Right ventricle myocardium inferior (tissue), 1 donor: ENCODE measurements at regions of chr11 and their contacts with region 1.

Region 1: DNA sequence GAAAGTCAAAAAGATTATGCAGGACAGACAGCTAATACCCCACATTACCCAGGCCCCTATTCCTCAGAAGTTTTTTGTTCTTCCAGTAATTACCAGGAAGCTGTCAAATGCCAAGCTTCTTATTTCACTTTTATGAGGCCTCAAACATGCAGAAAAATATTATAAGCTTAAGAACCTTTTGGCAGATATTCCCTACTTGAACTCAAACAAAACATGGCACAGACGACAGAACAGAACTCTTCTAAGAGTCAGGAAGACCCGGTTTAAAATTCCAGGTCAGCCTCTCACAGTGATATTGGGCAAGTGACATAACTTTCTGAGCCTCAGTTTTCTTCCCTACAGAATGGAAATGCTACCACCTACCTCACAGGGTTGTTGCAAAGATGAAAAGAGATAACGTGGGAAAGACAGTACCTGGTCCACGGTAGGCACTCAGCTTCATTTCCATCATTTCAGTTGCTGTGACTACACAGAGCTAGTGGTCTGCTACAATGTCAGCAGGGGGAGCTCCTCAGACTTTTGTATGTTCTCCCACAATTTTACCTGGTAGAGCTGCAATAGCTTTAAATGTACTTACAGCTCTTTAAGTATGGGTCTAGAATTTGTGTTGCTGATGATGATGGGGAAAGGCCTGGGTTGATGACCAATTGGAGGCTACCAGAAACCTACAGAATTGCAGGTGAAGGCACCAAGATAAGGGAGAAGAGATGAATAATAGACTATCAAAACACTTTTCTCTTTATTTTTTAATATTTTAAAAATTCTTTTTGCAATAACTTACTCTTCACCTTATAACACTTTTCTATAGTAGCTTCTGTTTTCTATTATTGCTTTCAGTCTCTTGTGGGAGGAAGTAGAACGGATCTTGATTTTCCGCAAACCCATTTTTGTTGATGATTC is 98.3 kb upstream of the CHRM4 start:
- DNase-seq: no peak
- ATAC-seq: no peak

Region 2: GRCh38 chr11:46529095-46529905 is 39.4 kb after region 1 on chr11:
- intact Hi-C with region 1: loop called (anchors 5 kb)
- DNase-seq: peak; percentile 75
- ATAC-seq: peak; percentile 69

Region 3: DNA sequence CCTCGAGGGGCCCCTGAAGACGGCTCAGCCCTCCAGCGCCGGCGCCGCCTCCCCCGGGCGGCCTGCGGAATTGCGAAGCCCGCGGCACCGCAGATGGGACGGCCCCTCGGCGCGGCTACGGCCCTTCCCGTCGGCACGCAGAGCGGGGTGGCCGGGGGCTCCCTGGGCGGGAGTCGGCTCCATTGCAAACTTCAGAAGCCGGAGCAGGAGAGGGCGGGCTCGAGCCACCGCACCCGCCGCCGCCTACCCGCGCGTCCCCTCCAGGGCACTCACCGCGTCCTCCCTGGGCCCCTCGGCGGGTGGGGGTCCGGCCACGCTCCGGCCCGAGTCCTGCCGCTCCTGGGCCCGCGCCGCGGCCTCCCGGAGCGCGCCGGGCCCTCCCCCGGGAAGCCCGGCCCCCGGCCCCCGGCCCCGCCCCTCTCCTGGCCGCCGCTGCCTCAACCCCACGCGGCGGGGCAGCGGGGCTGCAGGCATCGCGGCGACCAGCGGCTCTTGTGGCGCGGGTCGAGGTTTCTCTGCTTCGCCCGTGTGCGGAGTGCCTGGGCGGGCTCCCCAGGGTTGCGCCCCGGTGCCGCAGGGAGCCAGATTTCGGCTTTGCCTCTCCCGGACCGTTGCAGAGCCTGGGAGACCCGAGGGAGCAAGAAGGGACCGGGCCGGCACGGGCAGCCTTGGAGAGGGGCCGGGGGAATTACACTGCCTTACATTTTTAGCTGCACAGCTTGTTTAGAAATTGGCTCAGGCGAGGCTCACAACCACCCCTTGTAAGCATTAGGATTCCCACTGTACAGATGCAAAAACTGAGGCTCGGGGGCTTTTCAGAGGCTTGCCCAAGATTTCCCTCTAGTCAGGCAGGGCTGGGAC is 696.4 kb after region 1 on chr11 and contains the start of gene PACSIN3:
- intact Hi-C with region 1: no loop called
- DNase-seq: peak; percentile 81
- ATAC-seq: peak; percentile 56
- total RNA-seq, gene PACSIN3: 177 TPM